ENCODE measurements at regions of chr10 and their contacts with region 1.

Region 1: DNA sequence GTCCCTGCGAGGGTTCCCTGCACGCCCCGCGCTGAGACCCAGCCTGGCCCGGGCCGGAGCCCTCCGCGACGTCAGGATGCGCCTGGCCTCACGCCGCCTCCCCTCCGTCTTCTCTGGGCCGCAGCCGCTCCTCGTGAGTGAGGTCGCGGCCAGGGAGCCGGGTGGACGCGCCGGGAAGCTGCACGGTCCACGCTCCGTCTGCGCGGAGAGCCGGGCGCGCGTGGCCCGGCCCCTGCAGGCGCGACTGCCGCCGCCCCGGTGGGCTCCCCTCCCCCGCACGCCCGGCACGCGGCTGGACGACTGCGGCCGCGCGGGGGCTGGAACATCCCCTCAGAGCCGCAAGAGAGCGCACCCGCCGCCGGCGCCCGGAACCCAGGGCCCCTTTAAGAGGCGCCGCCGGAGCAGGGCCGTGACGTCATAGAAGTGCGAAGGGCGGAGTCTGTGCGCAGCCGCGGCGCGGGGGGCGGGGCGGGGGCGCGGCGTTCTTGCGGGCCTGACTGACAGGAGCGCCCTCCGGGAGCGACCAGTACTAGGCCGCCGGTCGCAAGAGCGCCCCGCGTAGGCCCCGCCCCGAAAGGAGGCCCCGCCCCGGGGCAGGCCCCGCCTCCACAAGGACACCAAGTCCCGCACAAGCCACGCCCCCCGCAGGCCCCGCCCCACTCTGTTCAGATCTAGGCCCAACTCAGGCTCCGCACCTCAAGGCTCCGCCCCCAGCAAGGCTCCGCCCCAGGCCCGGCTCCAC is 445 bp upstream of the INPP5A start:
- DNase-seq: peak; percentile 99 to 100
- ATAC-seq: peak; percentile 89 to 96 (median 89)
- H3K4me3 ChIP-seq: peak overlapping the region; percentile 26
- H3K4me3 Mint-ChIP-seq: peak overlapping the region; percentile 78
- H3K27ac ChIP-seq: peak overlapping the region; percentile 23
- H3K27ac Mint-ChIP-seq: peak overlapping the region in 1 of 2 donors; percentile 87
- H3K4me1 ChIP-seq: peaks cover 31% of the 10 kb centered on the region
- H3K4me1 Mint-ChIP-seq: peaks cover 24 to 41% of the 10 kb centered on the region in 2 donors
- H3K27me3 ChIP-seq: no peaks in the 10 kb centered on the region
- H3K27me3 Mint-ChIP-seq: no peaks in the 10 kb centered on the region
- CTCF ChIP-seq: peak; percentile 11

Region 2: GRCh38 chr10:132307823-132308587 is 229.1 kb before region 1 on chr10 and contains the start of gene STK32C:
- intact Hi-C with region 1: loop called (anchors 1 kb)
- DNase-seq: peak; percentile 76 to 95
- ATAC-seq: peak; percentile 89 to 94 (median 91)
- H3K4me3 ChIP-seq: peak within 1 kb of the TSS; percentile 61
- H3K4me3 Mint-ChIP-seq: peak within 1 kb of the TSS; percentile 94
- H3K27ac ChIP-seq: peak within 1 kb of the TSS; percentile 21
- H3K27ac Mint-ChIP-seq: peak within 1 kb of the TSS; percentile 46 to 69
- H3K4me1 ChIP-seq: peaks cover 14% of the 10 kb centered on the region
- H3K4me1 Mint-ChIP-seq: peaks cover 8 to 22% of the 10 kb centered on the region in 2 donors
- H3K27me3 ChIP-seq: no peaks in the 10 kb centered on the region
- H3K27me3 Mint-ChIP-seq: no peaks in the 10 kb centered on the region
- CTCF ChIP-seq: no peak
- total RNA-seq, gene STK32C: 12.7 to 22.1 (median 17.9) TPM

Region 3: DNA sequence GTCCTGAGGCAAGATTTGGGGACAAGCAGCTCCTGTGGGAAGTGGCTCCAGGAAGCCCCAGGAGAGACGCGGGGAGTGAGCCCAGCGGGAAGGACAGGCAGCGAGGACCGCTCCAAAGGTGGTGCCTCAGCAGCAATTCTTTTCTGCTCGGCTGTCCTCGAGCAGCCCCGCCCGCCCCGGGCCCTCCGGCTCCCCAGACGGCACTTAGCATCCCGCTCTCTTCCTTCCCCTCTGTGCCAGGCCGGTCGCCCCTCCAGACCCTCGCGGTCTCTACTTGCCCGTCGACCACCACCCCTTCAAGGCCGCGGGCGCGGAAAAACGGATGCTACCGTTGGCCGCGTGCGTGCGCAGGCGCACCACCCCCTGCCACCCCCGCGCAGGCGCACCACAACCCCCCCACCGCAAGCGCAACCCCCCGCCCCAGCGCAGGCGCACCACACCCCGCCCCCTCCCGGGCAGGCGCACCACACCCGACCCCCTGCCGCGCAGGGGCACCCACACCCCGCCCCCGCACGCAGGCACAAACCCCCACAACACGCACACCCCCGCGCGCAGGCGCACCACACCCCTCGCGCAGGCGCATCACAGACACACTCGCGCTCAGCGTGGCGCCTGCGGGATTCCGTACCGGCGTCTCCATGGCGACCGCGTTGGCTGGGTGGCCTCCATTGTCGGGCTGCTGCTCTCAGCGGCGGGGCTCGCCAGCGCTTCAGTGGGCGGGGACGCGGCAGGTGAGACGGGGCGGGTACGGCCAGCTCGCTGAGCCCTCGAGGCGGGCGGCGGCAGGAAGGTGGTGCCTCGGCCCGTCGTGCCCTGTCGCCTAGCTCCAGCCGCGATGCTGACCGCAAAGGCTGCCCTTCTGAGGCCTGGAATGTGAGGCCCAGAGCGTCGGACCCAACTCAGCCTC is 205.4 kb before region 1 on chr10 and contains the start of gene LRRC27:
- intact Hi-C with region 1: loop called (anchors 2 kb)
- DNase-seq: peak; percentile 100
- ATAC-seq: peak; percentile 73 to 89 (median 73)
- H3K4me3 ChIP-seq: peak within 1 kb of the TSS; percentile 82
- H3K4me3 Mint-ChIP-seq: peak within 1 kb of the TSS; percentile 91
- H3K27ac ChIP-seq: peak within 1 kb of the TSS; percentile 87
- H3K27ac Mint-ChIP-seq: peak within 1 kb of the TSS; percentile 73 to 96
- H3K4me1 ChIP-seq: peaks cover 54% of the 10 kb centered on the region
- H3K4me1 Mint-ChIP-seq: peaks cover 65 to 81% of the 10 kb centered on the region in 2 donors
- H3K27me3 ChIP-seq: no peaks in the 10 kb centered on the region
- H3K27me3 Mint-ChIP-seq: peaks cover 0 to 2% of the 10 kb centered on the region in 2 donors
- CTCF ChIP-seq: no peak
- total RNA-seq, gene LRRC27: 8.1 to 22.5 (median 9.9) TPM

Region 4: DNA sequence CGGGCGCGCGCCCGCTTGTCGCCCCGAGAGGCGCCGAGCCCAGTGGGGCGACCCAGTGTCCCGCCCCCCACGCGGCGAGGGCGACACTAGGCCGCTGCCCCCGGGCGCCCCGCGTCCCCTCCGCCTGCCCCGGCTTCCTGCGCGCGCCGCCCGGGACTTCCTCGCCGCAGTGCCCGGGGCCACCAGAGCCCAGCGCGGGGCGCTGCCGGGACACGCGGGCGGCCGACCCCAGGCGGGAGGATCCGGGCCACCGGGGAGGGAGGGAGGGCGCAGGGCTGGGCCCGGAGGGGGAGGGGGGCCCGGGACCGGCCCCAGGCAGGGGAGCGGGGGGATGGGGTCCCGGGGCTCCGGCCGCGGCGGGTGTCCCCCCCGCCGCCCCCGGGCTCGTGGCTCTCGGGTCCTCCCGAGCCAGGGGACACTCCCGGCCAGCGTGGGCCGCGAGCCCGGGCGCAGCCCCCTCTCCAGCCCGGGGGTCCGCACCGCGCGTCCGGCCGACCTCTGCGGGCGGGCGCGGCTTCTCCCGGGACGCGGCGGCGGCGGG is 140.6 kb before region 1 on chr10:
- intact Hi-C with region 1: loop called (anchors 5 kb)
- DNase-seq: peak; percentile 75 to 85
- ATAC-seq: peak; percentile 72 to 82 (median 73)
- H3K4me3 ChIP-seq: no peak overlapping the region
- H3K4me3 Mint-ChIP-seq: peak overlapping the region; percentile 37
- H3K27ac ChIP-seq: peak overlapping the region; percentile 72
- H3K27ac Mint-ChIP-seq: peak overlapping the region in 1 of 2 donors; percentile 86
- H3K4me1 ChIP-seq: peaks cover 65% of the 10 kb centered on the region
- H3K4me1 Mint-ChIP-seq: peaks cover 10 to 53% of the 10 kb centered on the region in 2 donors
- H3K27me3 ChIP-seq: no peaks in the 10 kb centered on the region
- H3K27me3 Mint-ChIP-seq: no peaks in the 10 kb centered on the region
- CTCF ChIP-seq: peak; percentile 17

Region 5: DNA sequence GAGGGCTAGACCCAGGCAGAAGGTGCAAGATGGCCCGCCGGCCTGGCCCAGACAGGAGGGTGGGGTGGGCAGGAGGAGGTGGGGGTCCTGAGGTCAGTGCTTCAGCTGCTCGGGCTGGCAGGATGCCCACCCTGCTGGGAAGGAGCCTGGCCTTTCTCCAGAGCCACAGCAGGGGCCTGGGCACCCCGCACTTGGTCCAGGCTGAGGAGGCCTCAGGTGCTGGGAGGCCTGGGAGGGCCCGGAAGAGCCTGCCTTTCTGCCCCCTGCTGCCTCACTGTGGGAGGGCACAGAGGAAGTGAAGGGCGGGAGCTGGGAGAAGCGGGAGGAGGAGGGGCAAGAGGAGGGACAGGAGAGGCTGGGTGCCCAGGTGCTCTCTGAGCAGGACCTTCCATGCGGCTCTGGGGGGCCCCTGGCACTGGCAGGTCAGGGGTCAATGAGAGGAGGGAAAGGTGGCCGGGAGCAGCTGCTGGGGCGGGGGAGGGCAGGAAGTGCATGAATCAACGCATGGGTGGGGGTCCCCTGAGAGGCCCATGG is 90.4 kb before region 1 on chr10:
- intact Hi-C with region 1: loop called (anchors 5 kb)
- DNase-seq: peak; percentile 48 to 86
- ATAC-seq: peak; percentile 11 to 36 (median 11)
- H3K4me3 ChIP-seq: peak overlapping the region; percentile 12
- H3K4me3 Mint-ChIP-seq: peak overlapping the region; percentile 82
- H3K27ac ChIP-seq: peak overlapping the region; percentile 100
- H3K27ac Mint-ChIP-seq: peak overlapping the region; percentile 94 to 97
- H3K4me1 ChIP-seq: peaks cover 73% of the 10 kb centered on the region
- H3K4me1 Mint-ChIP-seq: peaks cover 16 to 64% of the 10 kb centered on the region in 2 donors
- H3K27me3 ChIP-seq: no peaks in the 10 kb centered on the region
- H3K27me3 Mint-ChIP-seq: no peaks in the 10 kb centered on the region
- CTCF ChIP-seq: peak; percentile 41

Region 6: DNA sequence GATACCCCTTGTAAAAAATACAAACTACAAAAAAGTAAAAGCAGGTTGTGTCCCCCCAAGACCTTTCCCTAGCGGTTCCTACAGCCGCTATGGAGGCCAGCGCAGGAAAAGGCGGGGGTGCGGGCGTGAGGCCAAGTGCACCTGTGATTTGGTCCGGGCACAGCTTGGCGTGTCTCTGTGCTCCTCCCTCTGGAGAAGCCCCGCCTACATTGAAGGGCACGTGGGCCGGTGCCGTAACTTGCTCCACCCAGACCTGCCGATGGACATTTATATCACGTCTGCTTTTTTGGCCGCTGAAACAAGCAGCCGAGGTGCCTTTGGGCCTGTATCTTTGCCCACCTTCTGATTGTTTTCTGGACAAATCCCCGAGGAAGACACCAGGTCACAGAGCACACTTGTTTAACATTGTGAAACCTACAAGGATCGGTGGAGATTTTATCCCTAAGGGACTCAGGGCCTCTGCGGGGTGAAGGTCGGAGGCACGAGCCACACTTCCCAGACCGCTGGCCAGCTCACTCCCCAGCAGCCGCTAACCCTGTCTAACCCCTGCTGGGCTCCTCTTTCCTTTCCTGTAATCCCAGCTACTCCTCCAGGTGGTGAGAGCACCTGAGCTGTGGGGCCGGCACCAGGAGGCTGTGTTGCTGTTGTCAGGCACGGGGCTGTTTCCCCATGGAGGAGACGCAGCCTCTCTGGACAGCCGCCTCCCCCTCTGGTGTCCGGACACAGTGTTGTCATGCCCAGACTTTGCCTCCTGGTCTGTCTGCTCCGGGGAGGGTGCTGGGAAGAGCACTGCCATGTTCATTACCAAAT is 18.4 kb before region 1 on chr10:
- intact Hi-C with region 1: no loop called
- DNase-seq: no peak
- ATAC-seq: peak in 2 of 3 donors; percentile 44 to 58
- H3K4me3 ChIP-seq: no peak overlapping the region
- H3K4me3 Mint-ChIP-seq: no peak overlapping the region
- H3K27ac ChIP-seq: no peak overlapping the region
- H3K27ac Mint-ChIP-seq: no peak overlapping the region
- H3K4me1 ChIP-seq: peaks cover 16% of the 10 kb centered on the region
- H3K4me1 Mint-ChIP-seq: no peaks in the 10 kb centered on the region
- H3K27me3 ChIP-seq: peaks cover 3% of the 10 kb centered on the region
- H3K27me3 Mint-ChIP-seq: peaks cover 0 to 3% of the 10 kb centered on the region in 2 donors
- CTCF ChIP-seq: no peak

Region 7: DNA sequence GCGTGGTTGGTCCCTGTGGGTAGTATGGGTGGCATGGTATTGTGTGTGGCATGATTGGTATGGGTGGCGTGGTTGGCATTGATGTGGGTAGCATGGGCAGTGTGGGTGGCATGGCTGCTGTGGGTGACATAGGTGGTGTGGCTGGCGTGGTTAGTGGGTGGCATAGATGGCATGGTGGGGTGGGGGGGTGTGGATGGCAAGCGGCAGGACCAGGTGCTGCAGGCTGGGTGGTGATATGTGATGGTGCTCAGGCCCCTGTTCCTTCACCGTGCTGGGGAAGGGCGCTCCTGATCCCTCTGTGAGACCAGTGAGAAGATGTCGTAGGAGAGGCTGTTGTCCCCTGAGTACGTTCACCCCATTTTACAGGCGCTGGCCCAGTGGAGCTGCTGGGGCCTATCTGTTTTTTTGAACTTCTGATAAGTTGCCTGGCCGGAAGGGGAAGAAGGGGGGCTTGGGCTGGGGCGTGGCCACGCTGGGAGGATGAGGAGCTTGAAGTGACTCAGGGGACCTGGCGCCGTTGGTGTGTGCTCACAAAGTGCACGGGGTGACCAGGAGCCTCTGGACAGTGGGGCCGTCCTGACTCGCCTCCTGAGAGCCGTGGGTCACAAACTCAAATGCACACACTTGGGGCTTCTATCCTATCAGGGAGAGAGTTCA is 18.0 kb after region 1 on chr10:
- intact Hi-C with region 1: loop called (anchors 2 kb)
- DNase-seq: peak; percentile 64
- ATAC-seq: peak; percentile 59 to 74 (median 62)
- H3K4me3 ChIP-seq: peak overlapping the region; percentile 21
- H3K4me3 Mint-ChIP-seq: no peak overlapping the region
- H3K27ac ChIP-seq: peak overlapping the region; percentile 68
- H3K27ac Mint-ChIP-seq: no peak overlapping the region
- H3K4me1 ChIP-seq: peaks cover 54% of the 10 kb centered on the region
- H3K4me1 Mint-ChIP-seq: peaks cover 26 to 32% of the 10 kb centered on the region in 2 donors
- H3K27me3 ChIP-seq: no peaks in the 10 kb centered on the region
- H3K27me3 Mint-ChIP-seq: peaks cover 11 to 18% of the 10 kb centered on the region in 2 donors
- CTCF ChIP-seq: no peak

Region 8: DNA sequence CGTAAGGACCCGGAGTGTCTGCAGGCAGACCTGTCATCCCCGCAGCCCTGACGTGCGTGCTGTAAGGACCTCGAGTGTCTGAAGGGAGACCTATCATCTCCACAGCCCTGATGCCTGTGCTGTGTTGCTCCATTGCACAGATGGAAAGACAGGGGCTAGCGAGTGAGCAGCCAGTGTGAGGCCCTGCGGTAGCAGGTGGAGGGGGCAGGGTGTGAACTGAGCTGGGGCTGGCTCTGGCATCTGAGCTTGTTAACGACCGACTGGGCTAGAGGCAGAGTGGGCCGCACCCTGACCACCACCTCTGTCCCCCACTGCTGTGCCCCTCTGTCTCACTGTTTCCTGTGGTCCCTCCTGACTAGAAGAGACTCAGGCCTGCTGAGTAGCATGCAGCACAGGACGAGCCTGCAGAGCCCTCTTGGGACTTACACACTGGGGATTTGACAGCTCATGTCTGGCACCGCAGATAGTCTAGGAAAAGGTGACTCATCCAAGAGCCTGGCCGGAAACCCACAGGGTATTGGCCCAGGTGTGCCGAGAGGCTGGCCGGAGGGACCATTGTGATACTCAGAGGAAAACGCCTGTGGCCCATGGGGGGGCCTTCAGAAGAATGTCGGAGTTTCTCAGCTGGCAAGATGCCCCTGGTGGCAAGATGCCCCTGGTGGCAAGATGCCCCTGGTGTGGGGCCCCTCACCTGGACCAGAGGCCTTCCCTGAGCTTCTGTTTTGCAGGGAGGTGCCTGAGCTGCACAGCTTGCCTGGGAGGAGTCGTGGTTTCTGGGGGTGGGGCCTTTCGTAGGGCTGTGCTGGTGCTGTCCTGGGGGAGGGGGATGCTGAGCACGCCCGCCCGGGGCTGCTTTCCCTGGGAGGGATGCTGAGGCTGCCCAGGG is 34.8 kb after region 1 on chr10:
- intact Hi-C with region 1: loop called (anchors 1 kb)
- DNase-seq: peak; percentile 48 to 50
- ATAC-seq: peak; percentile 42 to 60 (median 58)
- H3K4me3 ChIP-seq: no peak overlapping the region
- H3K4me3 Mint-ChIP-seq: no peak overlapping the region
- H3K27ac ChIP-seq: peak overlapping the region; percentile 68
- H3K27ac Mint-ChIP-seq: no peak overlapping the region
- H3K4me1 ChIP-seq: peaks cover 54% of the 10 kb centered on the region
- H3K4me1 Mint-ChIP-seq: peaks cover 5 to 18% of the 10 kb centered on the region in 2 donors
- H3K27me3 ChIP-seq: no peaks in the 10 kb centered on the region
- H3K27me3 Mint-ChIP-seq: no peaks in the 10 kb centered on the region
- CTCF ChIP-seq: peak; percentile 14

Measured in natural killer cell (primary cell).